ENCODE measurements at regions of chr13 and their contacts with region 1.

Region 1: GRCh38 chr13:101474419-101474957 is 22.0 kb downstream of the ITGBL1 start:
- DNase-seq: peak; percentile 80
- H3K4me3 ChIP-seq: no peak overlapping the region
- H3K27ac ChIP-seq: no peak overlapping the region
- H3K4me1 ChIP-seq: peaks cover 9% of the 10 kb centered on the region
- H3K27me3 ChIP-seq: no peaks in the 10 kb centered on the region
- CTCF ChIP-seq: peak; percentile 40 to 44
- POLR2A ChIP-seq: no peak

Region 2: DNA sequence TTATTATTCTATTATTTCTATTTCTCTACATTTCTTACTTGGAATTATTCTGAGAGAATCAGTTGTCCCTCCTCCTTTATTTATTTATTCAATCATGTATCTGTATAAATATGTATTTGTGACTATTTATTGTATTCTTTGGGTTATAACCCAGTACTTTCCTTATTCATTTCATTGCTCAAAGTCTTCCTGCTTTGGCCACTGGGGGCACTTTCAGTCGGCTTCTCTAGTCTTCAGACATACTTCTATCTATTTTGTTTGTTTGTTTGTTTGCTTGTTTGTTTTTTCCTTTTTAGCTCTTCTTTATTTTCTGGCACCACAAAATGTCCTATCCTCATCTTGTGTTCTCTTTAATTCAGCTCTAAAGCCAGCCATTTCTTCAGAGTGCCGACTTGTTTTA is 318.6 kb before region 1 on chr13:
- CTCF ChIA-PET with region 1: interaction called, 47 read pairs
- POLR2A ChIA-PET with region 1: no interaction called
- dilution Hi-C with region 1: no loop called
- intact Hi-C with region 1: no loop called
- DNase-seq: no peak
- H3K4me3 ChIP-seq: no peak overlapping the region
- H3K27ac ChIP-seq: no peak overlapping the region
- H3K4me1 ChIP-seq: no peaks in the 10 kb centered on the region
- H3K27me3 ChIP-seq: no peaks in the 10 kb centered on the region
- CTCF ChIP-seq: peak; percentile 35 to 40
- POLR2A ChIP-seq: no peak

Region 3: GRCh38 chr13:101757446-101758039 is 283.1 kb after region 1 on chr13:
- CTCF ChIA-PET with region 1: interaction called, 4 read pairs
- POLR2A ChIA-PET with region 1: no interaction called
- dilution Hi-C with region 1: no loop called
- intact Hi-C with region 1: loop called (anchors 1 kb)
- DNase-seq: peak; percentile 68
- H3K4me3 ChIP-seq: no peak overlapping the region
- H3K27ac ChIP-seq: no peak overlapping the region
- H3K4me1 ChIP-seq: no peaks in the 10 kb centered on the region
- H3K27me3 ChIP-seq: peaks cover 0 to 3% of the 10 kb centered on the region in 2 experiments
- CTCF ChIP-seq: peak; percentile 35 to 37
- POLR2A ChIP-seq: no peak

Region 4: GRCh38 chr13:102170295-102170694 is 695.8 kb after region 1 on chr13:
- CTCF ChIA-PET with region 1: no interaction called
- POLR2A ChIA-PET with region 1: no interaction called
- dilution Hi-C with region 1: no loop called
- intact Hi-C with region 1: no loop called
- DNase-seq: no peak
- H3K4me3 ChIP-seq: no peak overlapping the region
- H3K27ac ChIP-seq: no peak overlapping the region
- H3K4me1 ChIP-seq: no peaks in the 10 kb centered on the region
- H3K27me3 ChIP-seq: no peaks in the 10 kb centered on the region
- CTCF ChIP-seq: no peak
- POLR2A ChIP-seq: no peak

Measured in endothelial cell of umbilical vein (primary cell).